WTC11 (cell line): ENCODE measurements at regions of chr1 and their contacts with region 1.

Region 1: GRCh38 chr1:205321164-205321958 is at the start of gene NUAK2:
- DNase-seq: peak; percentile 98
- ATAC-seq: peak; percentile 88
- H3K4me3 Mint-ChIP-seq: peak within 1 kb of the TSS; percentile 96
- H3K27ac Mint-ChIP-seq: peak within 1 kb of the TSS; percentile 68
- H3K4me1 Mint-ChIP-seq: peaks cover 60% of the 10 kb centered on the region
- H3K27me3 Mint-ChIP-seq: peaks cover 38% of the 10 kb centered on the region
- CTCF ChIP-seq: no peak
- total RNA-seq, gene NUAK2: 8.7 to 10.8 TPM (median 10.8 TPM) in 3 replicates

Region 2: GRCh38 chr1:205048382-205048781 is 273.0 kb before region 1 on chr1:
- CTCF ChIA-PET with region 1: no interaction called
- POLR2A ChIA-PET with region 1: no interaction called
- DNase-seq: no peak
- ATAC-seq: no peak
- H3K4me3 Mint-ChIP-seq: no peak overlapping the region
- H3K27ac Mint-ChIP-seq: no peak overlapping the region
- H3K4me1 Mint-ChIP-seq: peaks cover 33% of the 10 kb centered on the region
- H3K27me3 Mint-ChIP-seq: peaks cover 16% of the 10 kb centered on the region
- CTCF ChIP-seq: no peak

Region 3: GRCh38 chr1:205255941-205256780 is 65.2 kb before region 1 on chr1:
- CTCF ChIA-PET with region 1: interaction called, 17 read pairs
- POLR2A ChIA-PET with region 1: interaction called, 4 read pairs
- DNase-seq: peak; percentile 93
- ATAC-seq: peak; percentile 90
- H3K4me3 Mint-ChIP-seq: no peak overlapping the region
- H3K27ac Mint-ChIP-seq: 0 out of 2 replicates have a peak overlapping the region, but pooled peaks have one; percentile 83
- H3K4me1 Mint-ChIP-seq: peaks cover 17% of the 10 kb centered on the region
- H3K27me3 Mint-ChIP-seq: no peaks in the 10 kb centered on the region
- CTCF ChIP-seq: peak; percentile 98

Region 4: GRCh38 chr1:205284343-205285144 is 36.8 kb before region 1 on chr1:
- CTCF ChIA-PET with region 1: interaction called, 684 read pairs
- POLR2A ChIA-PET with region 1: interaction called, 13 read pairs
- DNase-seq: peak; percentile 80
- ATAC-seq: peak; percentile 89
- H3K4me3 Mint-ChIP-seq: no peak overlapping the region
- H3K27ac Mint-ChIP-seq: peak overlapping the region; percentile 90
- H3K4me1 Mint-ChIP-seq: peaks cover 49% of the 10 kb centered on the region
- H3K27me3 Mint-ChIP-seq: no peaks in the 10 kb centered on the region
- CTCF ChIP-seq: no peak

Region 5: DNA sequence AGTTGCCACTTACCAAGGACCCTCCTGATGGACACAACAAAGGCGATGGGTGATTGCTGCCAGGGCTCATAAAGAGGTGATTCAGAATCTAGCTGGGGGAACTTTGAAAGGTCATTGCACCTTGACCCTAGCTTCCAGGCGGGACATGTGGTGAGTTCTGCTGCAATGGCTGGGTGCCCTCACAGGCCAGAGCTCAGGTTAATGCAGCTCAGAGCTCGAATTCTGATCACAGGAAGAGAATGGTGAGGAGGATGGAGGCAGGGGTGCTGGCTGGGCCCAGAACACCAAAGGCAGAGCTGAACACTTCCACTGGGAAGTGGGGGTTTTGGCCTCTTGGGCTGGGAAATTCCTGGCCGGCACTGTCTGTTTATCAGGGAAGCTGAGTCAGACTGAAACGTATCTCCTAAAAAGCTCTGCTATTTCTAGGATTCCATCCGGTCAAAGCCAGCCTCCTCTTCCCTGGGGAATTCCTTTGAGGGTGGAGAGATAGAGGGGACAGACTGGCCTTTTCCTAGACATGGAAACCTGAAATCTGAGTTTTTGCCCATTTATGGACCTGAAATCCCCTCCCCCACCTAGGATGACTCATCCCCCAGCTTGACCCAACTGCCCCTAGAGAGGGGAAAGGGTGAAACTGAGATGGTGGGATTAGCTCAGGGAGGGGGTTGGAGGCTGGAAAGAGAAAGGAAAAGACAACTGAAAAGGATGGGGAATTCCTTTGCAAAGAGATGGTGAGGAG is 27.0 kb before region 1 on chr1:
- CTCF ChIA-PET with region 1: interaction called, 23 read pairs
- POLR2A ChIA-PET with region 1: interaction called, 186 read pairs
- DNase-seq: peak; percentile 58
- ATAC-seq: peak; percentile 58
- H3K4me3 Mint-ChIP-seq: peak overlapping the region; percentile 20; the same call in 1 of the 2 replicates
- H3K27ac Mint-ChIP-seq: peak overlapping the region; percentile 100
- H3K4me1 Mint-ChIP-seq: peaks cover 57% of the 10 kb centered on the region
- H3K27me3 Mint-ChIP-seq: no peaks in the 10 kb centered on the region; the same call in 1 of the 2 replicates
- CTCF ChIP-seq: no peak

Region 6: GRCh38 chr1:205300886-205301821 is 20.2 kb before region 1 on chr1:
- CTCF ChIA-PET with region 1: interaction called, 19 read pairs
- POLR2A ChIA-PET with region 1: interaction called, 186 read pairs
- DNase-seq: peak; percentile 98
- ATAC-seq: peak; percentile 83
- H3K4me3 Mint-ChIP-seq: peak overlapping the region; percentile 54
- H3K27ac Mint-ChIP-seq: peak overlapping the region; percentile 100
- H3K4me1 Mint-ChIP-seq: peaks cover 63% of the 10 kb centered on the region
- H3K27me3 Mint-ChIP-seq: no peaks in the 10 kb centered on the region
- CTCF ChIP-seq: no peak